Thyroid gland (tissue), 4 donors: ENCODE measurements at regions of chr10 and their contacts with region 1.

Region 1: GRCh38 chr10:113801569-113801968 is 50.1 kb downstream of the PLEKHS1 start:
- DNase-seq: no peak
- H3K4me3 ChIP-seq: no peak overlapping the region
- H3K27ac ChIP-seq: no peak overlapping the region
- H3K4me1 ChIP-seq: no peaks in the 10 kb centered on the region
- H3K27me3 ChIP-seq: no peaks in the 10 kb centered on the region
- CTCF ChIP-seq: no peak
- POLR2A ChIP-seq: no peak

Region 2: DNA sequence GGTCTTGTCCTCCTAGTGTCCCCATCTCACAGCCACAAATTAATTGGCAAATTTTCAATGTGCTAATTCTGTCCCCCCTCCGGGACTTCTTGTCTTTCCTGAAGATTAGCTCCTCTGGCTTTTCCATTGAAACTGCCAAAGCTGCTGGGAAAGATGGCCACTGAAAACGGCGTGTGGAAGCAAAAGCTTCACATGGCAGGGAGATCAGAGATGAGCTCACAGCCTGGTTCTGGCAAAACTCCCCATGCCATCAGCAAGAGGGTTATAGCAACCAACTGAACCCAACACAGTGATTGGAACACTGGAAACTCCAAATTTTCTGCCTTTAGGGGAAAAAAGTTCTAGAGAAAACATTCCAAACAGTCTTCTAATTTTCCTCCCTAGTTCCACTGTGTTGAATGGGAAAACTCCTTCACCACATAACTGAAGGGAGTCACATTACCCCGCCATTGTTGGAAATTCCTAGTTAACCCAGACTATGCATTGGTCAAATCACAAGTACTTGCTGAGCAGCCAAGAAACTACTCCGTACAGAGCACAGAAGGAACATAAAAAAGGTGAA is 174.7 kb before region 1 on chr10:
- intact Hi-C with region 1: no loop called
- DNase-seq: no peak
- H3K4me3 ChIP-seq: no peak overlapping the region
- H3K27ac ChIP-seq: no peak overlapping the region
- H3K4me1 ChIP-seq: peaks cover 5 to 6% of the 10 kb centered on the region in 2 donors
- H3K27me3 ChIP-seq: no peaks in the 10 kb centered on the region
- CTCF ChIP-seq: no peak
- POLR2A ChIP-seq: no peak

Region 3: GRCh38 chr10:114103284-114103683 is 301.7 kb after region 1 on chr10:
- intact Hi-C with region 1: loop called (anchors 2 kb)
- DNase-seq: no peak
- H3K4me3 ChIP-seq: no peak overlapping the region
- H3K27ac ChIP-seq: no peak overlapping the region
- H3K4me1 ChIP-seq: peaks cover 5 to 11% of the 10 kb centered on the region in 2 donors
- H3K27me3 ChIP-seq: no peaks in the 10 kb centered on the region
- CTCF ChIP-seq: peak in 4 of 6 experiments; percentile 54 to 77 (median 61)
- POLR2A ChIP-seq: no peak